ENCODE measurements at regions of chr1 and their contacts with region 1.

Region 1: DNA sequence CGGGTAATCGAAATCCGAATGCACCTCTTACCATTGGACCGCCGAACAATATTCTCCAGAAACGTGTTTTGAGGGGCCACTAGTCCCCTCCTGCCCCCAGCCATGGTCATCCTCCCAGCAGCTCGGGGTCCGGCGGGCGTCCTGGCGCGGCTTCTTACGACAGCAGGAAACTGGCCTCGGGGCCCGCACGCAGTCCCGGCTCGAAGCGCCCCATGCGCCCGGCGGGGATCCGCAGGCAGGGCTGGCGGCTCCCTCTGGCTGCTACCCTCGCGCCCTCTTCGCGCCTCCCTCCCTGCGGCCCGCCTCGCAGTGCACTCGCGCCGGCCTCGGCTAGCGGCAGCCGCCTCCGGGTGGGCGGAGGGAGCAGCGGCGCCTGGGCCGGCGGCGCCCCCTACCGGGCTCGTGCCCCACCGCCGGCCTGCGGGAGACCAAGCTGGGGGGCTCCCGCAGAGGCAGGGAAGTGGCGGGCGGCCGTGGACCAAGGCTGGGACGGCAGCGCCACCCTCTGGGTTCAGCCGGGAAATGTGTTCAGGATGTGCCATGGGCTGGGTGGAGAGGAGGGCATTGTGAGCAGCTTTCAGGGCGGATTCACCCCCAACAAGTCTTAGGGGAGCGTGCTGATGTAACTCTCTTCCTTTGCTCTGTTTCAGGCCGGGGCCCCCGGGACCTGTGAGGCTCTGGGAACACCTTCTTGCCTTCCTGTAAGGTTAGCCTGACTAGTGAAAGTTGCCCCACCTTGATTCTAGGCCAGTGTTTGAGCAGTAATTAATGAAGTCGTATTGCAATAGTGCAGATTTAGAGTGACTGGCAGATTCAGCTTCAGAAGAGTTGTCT is at the start of gene KCNH1:
- DNase-seq: peak; percentile 72 to 80 (median 74)
- ATAC-seq: peak; percentile 94
- H3K4me3 ChIP-seq: no peak within 1 kb of the TSS
- H3K4me1 ChIP-seq: no peaks in the 10 kb centered on the region
- CTCF ChIP-seq: peak; percentile 79
- total RNA-seq, gene KCNH1: 0.81 to 1.7 (median 1.2) TPM

Region 2: GRCh38 chr1:210584439-210585113 is 549.5 kb before region 1 on chr1:
- intact Hi-C with region 1: loop called in 1 of 2 experiments (anchors 10 kb)
- DNase-seq: peak; percentile 54 to 93 (median 81)
- ATAC-seq: peak; percentile 79
- H3K4me3 ChIP-seq: no peak overlapping the region
- H3K4me1 ChIP-seq: no peaks in the 10 kb centered on the region
- CTCF ChIP-seq: no peak

Measured in mucosa of descending colon (tissue), 3 donors.